Left ventricle myocardium superior (tissue), 1 donor: ENCODE measurements at regions of chr3 and their contacts with region 1.

Region 1: DNA sequence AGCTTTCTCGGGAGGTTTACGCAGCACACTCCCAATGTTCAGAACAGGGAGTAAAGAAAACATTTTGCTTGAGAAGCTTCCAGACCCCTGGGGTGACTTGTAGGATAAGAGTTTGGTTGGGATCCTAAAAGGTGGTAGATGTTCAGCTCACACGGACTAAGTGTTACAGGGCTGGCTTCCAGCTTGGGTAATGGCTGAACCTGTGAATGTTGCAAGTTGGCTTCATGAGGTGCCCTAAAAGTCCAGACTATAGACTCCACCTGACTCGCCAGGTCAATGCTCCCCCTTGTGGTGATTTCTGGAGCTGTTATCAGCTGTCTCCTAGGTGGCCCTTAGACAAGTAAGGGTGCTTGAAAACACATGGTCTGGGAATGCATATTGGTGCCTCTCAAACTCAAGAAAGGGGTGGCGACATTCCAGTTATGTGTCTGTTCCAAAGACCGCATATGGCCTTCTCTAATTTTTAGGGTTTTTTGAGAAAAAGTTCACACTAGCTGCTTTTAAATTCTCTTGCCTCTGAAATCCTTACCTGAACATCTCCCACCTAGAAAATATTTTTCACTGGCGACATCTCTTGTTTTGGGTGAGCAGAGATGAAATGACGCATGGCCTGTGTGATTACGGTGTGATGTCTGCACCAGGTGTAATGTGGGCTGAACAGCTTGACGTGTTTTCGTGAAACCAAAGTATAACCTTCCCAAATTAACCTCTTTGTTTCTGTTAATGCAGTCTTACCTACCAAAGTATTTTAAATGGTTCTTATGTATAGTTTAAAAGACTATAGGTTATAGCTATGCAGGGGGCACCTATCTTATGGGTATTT is 175.7 kb upstream of the KBTBD8 start:
- DNase-seq: peak; percentile 30
- ATAC-seq: peak; percentile 78

Region 2: GRCh38 chr3:66253790-66254620 is 568.4 kb before region 1 on chr3:
- intact Hi-C with region 1: loop called (anchors 5 kb)
- DNase-seq: no peak
- ATAC-seq: no peak

Region 3: GRCh38 chr3:66797889-66798560 is 24.4 kb before region 1 on chr3:
- intact Hi-C with region 1: no loop called
- DNase-seq: peak; percentile 52
- ATAC-seq: peak; percentile 78

Region 4: DNA sequence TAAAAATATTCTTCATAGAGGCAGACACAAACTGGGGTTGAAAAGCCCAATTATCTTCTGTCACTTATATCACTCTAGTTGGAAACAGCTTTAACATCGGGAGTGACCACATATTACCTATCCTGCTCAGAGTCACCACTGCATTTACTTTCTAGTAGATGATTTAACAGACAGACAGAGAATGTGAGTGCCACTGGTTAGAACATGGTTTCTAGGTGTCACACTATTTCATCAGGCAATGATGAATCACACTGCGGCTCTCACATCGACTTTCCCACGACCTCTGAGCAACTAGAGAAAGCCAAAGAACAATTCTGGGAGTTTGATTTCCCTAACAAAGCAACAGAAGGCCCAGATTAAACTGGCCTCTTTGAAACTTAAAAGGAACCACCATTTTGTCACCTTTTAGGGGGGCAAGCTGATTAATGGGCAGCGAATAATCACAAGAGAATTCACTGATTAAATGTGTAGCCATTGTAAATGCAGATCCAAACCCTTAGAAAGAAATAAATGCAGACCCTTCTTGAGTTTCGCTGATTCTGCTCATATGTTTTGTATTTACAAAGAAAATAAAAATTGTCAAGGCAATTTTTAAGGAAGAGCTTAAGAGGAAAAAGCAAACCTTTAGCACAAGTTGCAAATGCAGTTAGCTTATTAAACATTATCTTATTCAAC is 63.1 kb after region 1 on chr3:
- intact Hi-C with region 1: no loop called
- DNase-seq: no peak
- ATAC-seq: no peak

Region 5: DNA sequence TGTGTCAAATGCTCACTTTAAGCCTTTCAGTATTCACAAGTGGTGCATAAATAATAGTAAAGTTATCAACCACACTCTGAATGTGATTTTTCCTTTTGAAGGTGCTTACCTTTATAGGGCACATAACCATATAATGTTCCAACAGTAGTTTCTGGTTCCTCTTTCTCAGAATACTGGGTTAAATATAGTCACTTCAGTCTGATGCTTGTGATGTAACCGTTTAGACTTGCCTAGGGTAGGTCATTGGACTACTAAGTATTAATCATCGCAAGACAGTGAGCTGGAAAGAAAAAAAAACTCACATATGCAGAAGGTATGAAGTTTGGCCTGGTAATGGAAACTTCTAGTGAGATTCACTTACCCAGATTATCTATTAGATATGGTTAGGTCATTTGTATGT is 177.6 kb after region 1 on chr3:
- intact Hi-C with region 1: no loop called
- DNase-seq: no peak
- ATAC-seq: no peak